IMR-90 (cell line): ENCODE measurements at regions of chr21 and their contacts with region 1.

Region 1: DNA sequence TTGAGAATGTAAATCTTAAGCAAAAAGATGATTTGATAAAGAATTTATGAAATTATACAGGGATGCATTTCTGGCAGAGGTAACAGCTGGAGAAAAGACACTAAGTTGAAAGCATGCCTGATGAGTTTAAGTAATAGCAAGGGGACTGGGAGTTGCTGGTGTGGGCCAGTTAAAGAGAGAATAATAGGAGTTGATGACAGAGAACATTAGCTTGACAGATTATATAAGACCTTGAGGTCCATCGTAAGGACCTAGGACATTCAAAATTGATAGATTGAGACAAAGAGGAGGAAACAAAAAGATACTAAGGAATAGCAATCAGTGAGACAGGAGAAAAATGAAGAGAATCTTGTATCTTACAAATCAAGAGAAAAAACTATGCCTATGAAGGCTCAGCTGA is 84.7 kb upstream of the TMPRSS15 start:
- DNase-seq: no peak
- ATAC-seq: no peak
- H3K4me3 ChIP-seq: no peak overlapping the region
- H3K27ac ChIP-seq: no peak overlapping the region
- H3K4me1 ChIP-seq: no peaks in the 10 kb centered on the region
- H3K27me3 ChIP-seq: no peaks in the 10 kb centered on the region
- CTCF ChIP-seq: no peak
- POLR2A ChIP-seq: no peak
- RAD21 ChIP-seq: no peak

Region 2: GRCh38 chr21:18545908-18546307 is 57.7 kb after region 1 on chr21:
- CTCF ChIA-PET with region 1: no interaction called
- POLR2A ChIA-PET with region 1: no interaction called
- dilution Hi-C with region 1: no loop called
- in situ Hi-C with region 1: no loop called
- intact Hi-C with region 1: loop called (anchors 10 kb)
- DNase-seq: no peak
- ATAC-seq: no peak
- H3K4me3 ChIP-seq: no peak overlapping the region
- H3K27ac ChIP-seq: no peak overlapping the region
- H3K4me1 ChIP-seq: no peaks in the 10 kb centered on the region
- H3K27me3 ChIP-seq: no peaks in the 10 kb centered on the region
- CTCF ChIP-seq: no peak
- POLR2A ChIP-seq: no peak
- RAD21 ChIP-seq: no peak